IMR-90 (cell line): ENCODE measurements at regions of chr1 and their contacts with region 1.

Region 1: DNA sequence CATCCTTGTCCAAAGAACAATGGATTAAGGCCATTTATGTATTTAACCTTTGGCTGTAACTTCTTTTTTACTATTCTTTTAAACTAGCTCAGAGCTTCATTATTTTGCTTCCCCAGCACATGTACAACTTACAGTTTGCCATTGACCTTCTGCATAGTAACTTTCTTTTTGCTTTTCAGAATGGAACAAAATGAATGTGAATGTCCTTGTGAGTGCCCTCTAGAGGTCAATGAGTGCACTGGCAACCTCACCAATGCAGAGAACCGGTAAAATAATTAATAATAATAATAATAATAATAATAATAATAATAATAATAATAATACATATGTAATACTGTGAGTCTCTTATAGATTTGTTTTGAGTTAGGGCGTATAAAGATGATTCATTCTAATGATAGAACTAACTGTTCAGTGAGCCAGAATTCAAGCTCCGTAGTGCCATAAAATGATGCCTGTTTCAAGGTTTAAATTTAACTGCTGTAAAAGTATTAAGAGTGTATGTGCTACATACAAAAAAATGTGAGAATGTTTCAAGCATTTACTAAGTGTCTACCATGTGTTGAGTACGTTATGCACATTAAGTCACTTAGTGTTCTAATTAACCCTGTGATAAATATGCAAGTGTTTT is 69.0 kb upstream of the RAVER2 start:
- DNase-seq: peak; percentile 37
- ATAC-seq: peak; percentile 80
- H3K4me3 ChIP-seq: no peak overlapping the region
- H3K27ac ChIP-seq: no peak overlapping the region
- H3K4me1 ChIP-seq: no peaks in the 10 kb centered on the region
- H3K27me3 ChIP-seq: no peaks in the 10 kb centered on the region
- CTCF ChIP-seq: peak; percentile 60
- POLR2A ChIP-seq: no peak
- RAD21 ChIP-seq: peak; percentile 52

Region 2: GRCh38 chr1:64469977-64470664 is 205.7 kb before region 1 on chr1 and contains the start of gene CACHD1:
- CTCF ChIA-PET with region 1: interaction called, 3 read pairs
- POLR2A ChIA-PET with region 1: no interaction called
- dilution Hi-C with region 1: no loop called
- in situ Hi-C with region 1: no loop called
- intact Hi-C with region 1: loop called (anchors 1 kb)
- DNase-seq: peak; percentile 70
- ATAC-seq: peak; percentile 80
- H3K4me3 ChIP-seq: peak within 1 kb of the TSS; percentile 80
- H3K27ac ChIP-seq: peak within 1 kb of the TSS; percentile 55
- H3K4me1 ChIP-seq: peaks cover 2% of the 10 kb centered on the region; the same call in 1 of the 2 replicates
- H3K27me3 ChIP-seq: peaks cover 15% of the 10 kb centered on the region
- CTCF ChIP-seq: peak; percentile 38
- POLR2A ChIP-seq: no peak
- RAD21 ChIP-seq: peak; percentile 42
- total RNA-seq, gene CACHD1: 5.6 and 5.9 TPM in 2 replicates

Region 3: GRCh38 chr1:64663668-64664067 is 12.2 kb before region 1 on chr1:
- CTCF ChIA-PET with region 1: interaction called, 11 read pairs
- POLR2A ChIA-PET with region 1: no interaction called
- dilution Hi-C with region 1: no loop called
- in situ Hi-C with region 1: no loop called
- intact Hi-C with region 1: no loop called
- DNase-seq: peak; percentile 7
- ATAC-seq: peak; percentile 32; the same call in 1 of the 2 replicates
- H3K4me3 ChIP-seq: no peak overlapping the region
- H3K27ac ChIP-seq: no peak overlapping the region
- H3K4me1 ChIP-seq: no peaks in the 10 kb centered on the region
- H3K27me3 ChIP-seq: no peaks in the 10 kb centered on the region
- CTCF ChIP-seq: no peak
- POLR2A ChIP-seq: no peak
- RAD21 ChIP-seq: no peak

Region 4: GRCh38 chr1:64790832-64791487 is 115.1 kb after region 1 on chr1:
- CTCF ChIA-PET with region 1: no interaction called
- POLR2A ChIA-PET with region 1: no interaction called
- dilution Hi-C with region 1: no loop called
- in situ Hi-C with region 1: no loop called
- intact Hi-C with region 1: no loop called
- DNase-seq: no peak
- ATAC-seq: no peak
- H3K4me3 ChIP-seq: no peak overlapping the region
- H3K27ac ChIP-seq: no peak overlapping the region
- H3K4me1 ChIP-seq: no peaks in the 10 kb centered on the region
- H3K27me3 ChIP-seq: no peaks in the 10 kb centered on the region
- CTCF ChIP-seq: no peak
- POLR2A ChIP-seq: no peak
- RAD21 ChIP-seq: no peak